Colonic mucosa (tissue), 4 donors: ENCODE measurements at regions of chr19 and their contacts with region 1.

Region 1: DNA sequence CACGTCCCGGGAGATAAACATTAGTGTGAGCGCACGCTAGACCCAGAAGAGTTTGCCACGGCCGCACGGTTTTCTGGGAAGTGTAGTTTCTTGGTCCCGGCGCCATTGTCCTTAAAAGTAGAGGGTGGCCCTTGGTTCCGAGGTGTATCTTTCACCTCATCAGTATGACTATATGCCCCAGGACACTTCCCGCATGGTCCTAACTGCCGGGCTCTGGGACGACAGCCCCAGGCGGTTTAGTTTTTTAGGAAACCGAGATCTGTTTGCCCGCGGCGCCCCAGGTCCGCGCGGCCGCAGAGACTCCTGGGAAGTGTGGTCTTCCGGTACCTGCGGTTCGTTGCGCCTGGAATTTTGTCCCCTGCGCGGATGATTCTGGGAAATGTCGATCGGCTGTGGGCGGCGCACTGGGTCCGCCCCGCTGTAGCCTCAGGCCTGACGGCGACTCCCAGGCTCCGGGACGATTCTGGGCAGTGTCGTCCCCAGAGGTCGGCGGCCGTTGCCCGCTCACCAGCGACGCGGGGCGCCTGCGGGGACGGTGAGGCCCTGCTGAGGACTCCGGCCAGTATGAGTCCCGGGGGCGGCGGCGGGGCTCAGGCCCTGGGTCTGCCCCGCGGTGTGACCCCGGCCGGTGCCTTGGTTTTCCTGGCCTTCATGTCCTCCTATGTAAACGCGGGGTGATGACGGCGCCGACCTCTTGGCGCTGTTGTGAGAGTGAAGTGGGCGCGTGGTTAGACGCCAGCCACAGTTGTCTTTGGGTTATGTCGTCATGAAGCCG is at the start of gene ZNF181:
- DNase-seq: peak; percentile 92
- H3K4me3 ChIP-seq: peak within 1 kb of the TSS; percentile 48
- H3K27ac ChIP-seq: peak within 1 kb of the TSS; percentile 86
- H3K4me1 ChIP-seq: no peaks in the 10 kb centered on the region
- H3K27me3 ChIP-seq: no peaks in the 10 kb centered on the region
- CTCF ChIP-seq: no peak
- total RNA-seq, gene ZNF181: 6.2 to 7.2 TPM

Region 2: DNA sequence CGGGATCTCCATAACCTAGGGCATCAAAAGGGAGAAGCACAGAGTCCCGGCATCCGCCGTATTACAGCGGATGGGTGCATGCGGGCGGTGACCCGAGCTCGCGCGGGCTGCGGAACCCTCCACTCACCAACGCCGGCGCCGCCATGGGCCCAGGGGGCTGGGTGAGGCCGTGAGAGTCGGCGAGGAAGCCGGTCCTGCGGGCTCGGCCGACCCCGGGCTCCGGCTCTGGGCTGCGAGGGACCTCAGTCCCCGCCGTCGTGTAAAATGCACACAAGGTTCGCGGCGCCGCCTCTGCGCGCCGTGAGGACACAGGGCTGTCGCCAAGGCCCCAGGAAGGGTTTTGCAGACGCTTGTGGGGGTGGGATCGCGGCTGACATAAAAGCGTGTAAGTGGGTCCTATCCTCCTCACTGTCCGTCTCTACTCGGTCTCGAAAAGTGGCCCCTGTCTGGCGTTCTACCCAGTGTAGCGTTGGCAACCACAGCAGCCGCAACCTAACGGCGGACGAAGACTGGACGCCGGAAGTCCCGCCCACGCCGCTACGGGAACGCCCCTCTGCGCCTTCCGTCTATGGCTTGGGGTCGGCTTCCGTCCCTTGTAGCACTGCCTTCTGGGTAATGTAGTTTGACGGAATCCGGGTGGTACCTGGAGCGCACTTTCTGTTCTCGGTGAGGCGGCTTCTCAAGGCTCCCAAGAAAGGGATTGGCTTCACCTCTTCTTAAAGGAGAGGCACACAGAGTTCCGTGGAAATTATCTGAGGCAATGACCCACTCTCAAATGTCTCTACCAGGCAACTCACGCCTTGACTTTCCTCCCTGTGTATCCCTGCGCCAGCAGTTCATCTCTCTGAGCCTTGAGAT is 38.9 kb after region 1 on chr19 and contains the start of gene ZNF599:
- intact Hi-C with region 1: loop called (anchors 2 kb)
- DNase-seq: peak; percentile 92
- H3K4me3 ChIP-seq: peak within 1 kb of the TSS; percentile 91
- H3K27ac ChIP-seq: peak within 1 kb of the TSS; percentile 51
- H3K4me1 ChIP-seq: no peaks in the 10 kb centered on the region
- H3K27me3 ChIP-seq: no peaks in the 10 kb centered on the region
- CTCF ChIP-seq: no peak
- total RNA-seq, gene ZNF599: 3.0 to 3.5 TPM

Region 3: GRCh38 chr19:34818270-34818669 is 84.3 kb after region 1 on chr19:
- intact Hi-C with region 1: no loop called
- DNase-seq: no peak
- H3K4me3 ChIP-seq: no peak overlapping the region
- H3K27ac ChIP-seq: no peak overlapping the region
- H3K4me1 ChIP-seq: no peaks in the 10 kb centered on the region
- H3K27me3 ChIP-seq: no peaks in the 10 kb centered on the region
- CTCF ChIP-seq: no peak

Region 4: GRCh38 chr19:35066691-35067563 is 332.9 kb after region 1 on chr19:
- intact Hi-C with region 1: no loop called
- DNase-seq: peak; percentile 93
- H3K4me3 ChIP-seq: no peak overlapping the region
- H3K27ac ChIP-seq: no peak overlapping the region
- H3K4me1 ChIP-seq: no peaks in the 10 kb centered on the region
- H3K27me3 ChIP-seq: no peaks in the 10 kb centered on the region
- CTCF ChIP-seq: peak; percentile 89